Breast epithelium (tissue), 4 donors: ENCODE measurements at regions of chr12 and their contacts with region 1.

Region 1: DNA sequence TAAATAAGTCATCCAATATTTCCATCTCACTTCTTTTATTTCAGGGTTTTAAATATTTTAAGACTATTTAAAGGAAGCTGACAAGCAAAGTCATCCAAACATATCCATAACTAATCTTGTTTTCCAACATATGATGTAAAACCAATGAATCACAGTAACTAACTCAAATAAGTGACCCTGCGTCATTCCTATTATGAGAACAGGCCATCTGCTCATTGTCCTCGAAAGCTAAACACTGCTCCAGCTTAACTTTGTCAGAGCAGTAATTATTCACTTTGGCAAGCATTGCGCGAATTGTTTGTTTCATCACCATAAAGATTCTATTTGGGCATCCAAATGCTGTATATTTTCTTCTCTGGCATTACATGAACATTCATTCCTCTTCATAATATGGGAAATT is 99.1 kb downstream of the CAPZA3 start:
- DNase-seq: no peak
- H3K4me3 ChIP-seq: no peak overlapping the region
- H3K27ac ChIP-seq: no peak overlapping the region
- H3K4me1 ChIP-seq: no peaks in the 10 kb centered on the region
- H3K27me3 ChIP-seq: no peaks in the 10 kb centered on the region
- CTCF ChIP-seq: no peak
- POLR2A ChIP-seq: no peak

Region 2: GRCh38 chr12:18882690-18883089 is 45.7 kb after region 1 on chr12:
- intact Hi-C with region 1: no loop called
- DNase-seq: no peak
- H3K4me3 ChIP-seq: no peak overlapping the region
- H3K27ac ChIP-seq: no peak overlapping the region
- H3K4me1 ChIP-seq: no peaks in the 10 kb centered on the region
- H3K27me3 ChIP-seq: no peaks in the 10 kb centered on the region
- CTCF ChIP-seq: no peak
- POLR2A ChIP-seq: no peak

Region 3: DNA sequence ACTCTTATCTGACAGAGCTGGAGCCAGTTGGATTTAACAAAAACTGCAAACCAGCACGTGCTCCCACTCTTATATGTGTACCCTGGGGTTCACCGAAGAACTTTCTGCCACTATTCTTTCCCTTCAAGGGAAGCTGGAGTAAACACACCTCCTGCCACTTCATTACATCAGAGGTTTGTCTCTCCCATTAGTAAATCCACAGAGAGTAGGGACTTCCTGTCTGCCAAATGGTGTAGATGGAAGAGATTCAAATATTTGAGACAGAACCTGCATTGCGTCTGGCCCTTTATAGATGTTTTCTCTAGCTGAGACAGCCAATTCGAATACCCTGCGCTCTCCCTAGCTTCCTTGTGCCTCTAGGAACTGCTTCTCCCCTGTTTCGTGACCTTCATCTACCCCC is 573.2 kb after region 1 on chr12:
- intact Hi-C with region 1: loop called (anchors 5 kb)
- DNase-seq: no peak
- H3K4me3 ChIP-seq: no peak overlapping the region
- H3K27ac ChIP-seq: no peak overlapping the region
- H3K4me1 ChIP-seq: no peaks in the 10 kb centered on the region
- H3K27me3 ChIP-seq: no peaks in the 10 kb centered on the region
- CTCF ChIP-seq: no peak
- POLR2A ChIP-seq: no peak